Head of caudate nucleus (tissue), 42 donors: ENCODE measurements at regions of chr3 and their contacts with region 1.

Region 1: DNA sequence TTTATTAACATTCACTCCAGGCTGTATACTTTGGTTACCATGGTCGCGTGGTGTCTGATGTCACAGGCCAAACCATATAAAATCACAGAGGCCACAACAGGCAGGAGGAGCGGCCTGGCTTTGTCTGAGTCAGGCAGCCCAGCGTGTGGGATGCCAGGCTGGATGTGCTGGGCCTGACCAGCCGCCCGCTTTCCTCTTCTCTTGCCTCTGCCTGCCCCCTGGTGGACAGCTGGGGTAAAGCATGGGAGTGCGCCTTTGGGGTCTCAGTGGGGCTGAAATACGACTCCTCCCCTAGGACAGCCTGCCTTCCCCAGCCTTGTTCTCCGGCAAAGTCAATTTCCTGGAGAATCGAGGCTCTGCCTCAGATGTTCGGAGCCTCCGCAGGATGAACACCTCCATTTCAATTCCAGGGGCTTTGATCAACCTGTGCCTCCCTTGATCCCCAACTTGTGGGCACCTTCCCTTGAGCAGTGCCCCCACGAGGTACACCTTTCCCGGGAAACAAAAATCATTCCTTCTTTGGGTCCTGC is 78.2 kb downstream of the CCNL1 start:
- DNase-seq: peak; percentile 84 to 98 (median 91)

Region 2: DNA sequence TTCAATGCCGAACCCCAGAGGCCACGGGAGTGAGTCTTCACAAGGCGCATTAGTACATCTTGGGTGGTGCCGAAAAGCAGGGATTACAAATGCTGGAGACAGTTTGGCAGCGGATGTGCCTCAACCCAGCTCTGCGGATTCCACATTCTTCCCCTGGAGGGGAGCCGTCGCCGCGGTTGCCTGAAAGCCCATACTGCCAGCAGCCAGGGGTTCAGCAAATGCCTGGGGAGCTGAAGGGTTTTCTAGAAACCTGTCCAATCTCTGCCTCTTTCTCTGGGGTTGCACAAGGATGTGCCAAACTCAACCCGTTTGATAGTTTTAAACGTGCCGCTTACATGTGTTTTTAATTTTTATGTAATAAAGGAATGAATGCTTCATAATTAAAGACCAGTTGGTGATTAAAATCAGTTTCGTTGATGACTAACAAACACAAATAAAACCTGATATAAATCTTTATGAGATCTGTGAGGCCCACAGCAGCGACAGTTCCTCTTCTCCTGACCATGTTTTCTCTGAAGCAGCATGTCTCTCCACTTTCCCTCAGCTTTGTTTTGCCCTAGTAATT is 330.2 kb before region 1 on chr3:
- intact Hi-C with region 1: no loop called
- DNase-seq: peak in 16 of 42 donors; percentile 9 to 49 (median 24)

Region 3: GRCh38 chr3:156826144-156826895 is 255.4 kb before region 1 on chr3 and contains the start of gene LEKR1:
- intact Hi-C with region 1: loop called (anchors 10 kb)
- DNase-seq: peak; percentile 50 to 92 (median 82)